CD4-positive, alpha-beta memory T cell (primary cell): ENCODE measurements at regions of chr20 and their contacts with region 1.

Region 1: DNA sequence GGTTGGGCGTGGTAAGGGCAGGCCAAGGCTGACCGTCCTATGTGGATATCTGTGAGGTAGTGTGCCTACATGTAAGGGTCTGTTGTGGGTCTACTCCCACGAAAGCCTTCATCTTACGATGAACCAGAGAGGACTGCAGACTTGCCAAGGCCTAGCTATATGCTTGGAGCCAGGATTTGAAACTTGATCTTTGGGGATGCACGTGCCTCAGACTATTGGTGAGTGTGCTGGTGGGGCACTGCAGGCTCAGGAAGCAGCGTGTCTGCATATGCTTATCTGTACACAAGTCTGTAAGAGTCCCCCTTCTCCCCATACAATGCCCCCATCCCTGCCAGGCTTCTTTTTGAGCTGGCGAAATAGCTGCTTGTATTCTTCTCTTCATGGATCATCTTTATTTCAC is 17.9 kb downstream of the PLCG1 start:
- DNase-seq: peak in 1 of 5 donors; percentile 30
- H3K4me3 ChIP-seq: no peak overlapping the region
- H3K4me3 Mint-ChIP-seq: peak overlapping the region in 7 of 8 donors; percentile 37 to 93 (median 75)
- H3K27ac ChIP-seq: peak overlapping the region; percentile 73
- H3K27ac Mint-ChIP-seq: peak overlapping the region; percentile 78 to 99 (median 98)
- H3K4me1 ChIP-seq: peaks cover 100% of the 10 kb centered on the region
- H3K4me1 Mint-ChIP-seq: peaks cover 89 to 100% (median 94%) of the 10 kb centered on the region in 4 donors
- H3K27me3 ChIP-seq: no peaks in the 10 kb centered on the region
- H3K27me3 Mint-ChIP-seq: peaks cover 0 to 3% of the 10 kb centered on the region in 2 donors

Region 2: DNA sequence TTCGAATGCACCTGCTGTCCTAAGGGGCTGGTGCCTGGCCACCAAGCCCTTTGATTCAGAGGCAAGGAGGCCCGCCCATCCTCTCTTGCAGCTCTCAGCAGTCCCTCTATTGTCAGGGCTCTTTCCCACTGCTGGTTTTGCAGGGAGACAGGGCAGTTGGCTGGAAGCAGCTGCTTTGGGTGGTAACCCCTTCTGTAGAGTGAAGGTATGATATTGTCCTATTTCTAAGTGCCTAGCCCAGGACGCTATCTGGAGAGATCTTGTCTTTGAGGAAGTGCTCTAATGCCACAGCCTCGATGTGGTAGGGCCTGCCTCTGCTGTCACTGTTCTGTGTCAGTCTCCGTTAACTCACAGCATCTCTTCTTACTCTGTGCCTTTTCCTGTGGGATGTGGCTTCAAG is 12.3 kb before region 1 on chr20:
- CTCF ChIA-PET with region 1: interaction called, 178 read pairs
- POLR2A ChIA-PET with region 1: interaction called, 753 read pairs
- intact Hi-C with region 1: loop called (anchors 1 kb)
- DNase-seq: peak; percentile 49 to 82 (median 54)
- H3K4me3 ChIP-seq: peak overlapping the region in 1 of 2 donors; percentile 82
- H3K4me3 Mint-ChIP-seq: peak overlapping the region; percentile 93 to 99 (median 96)
- H3K27ac ChIP-seq: peak overlapping the region; percentile 84
- H3K27ac Mint-ChIP-seq: peak overlapping the region; percentile 88 to 98 (median 93)
- H3K4me1 ChIP-seq: peaks cover 89% of the 10 kb centered on the region
- H3K4me1 Mint-ChIP-seq: peaks cover 79 to 100% (median 87%) of the 10 kb centered on the region in 4 donors
- H3K27me3 ChIP-seq: no peaks in the 10 kb centered on the region
- H3K27me3 Mint-ChIP-seq: no peaks in the 10 kb centered on the region

Region 3: GRCh38 chr20:41167481-41168253 is 12.4 kb after region 1 on chr20:
- CTCF ChIA-PET with region 1: interaction called, 51 read pairs
- POLR2A ChIA-PET with region 1: interaction called, 70 read pairs
- intact Hi-C with region 1: no loop called
- DNase-seq: no peak
- H3K4me3 ChIP-seq: no peak overlapping the region
- H3K4me3 Mint-ChIP-seq: no peak overlapping the region
- H3K27ac ChIP-seq: peak overlapping the region; percentile 22
- H3K27ac Mint-ChIP-seq: peak overlapping the region; percentile 36 to 98 (median 73)
- H3K4me1 ChIP-seq: peaks cover 16% of the 10 kb centered on the region
- H3K4me1 Mint-ChIP-seq: peaks cover 5 to 58% (median 32%) of the 10 kb centered on the region in 4 donors
- H3K27me3 ChIP-seq: no peaks in the 10 kb centered on the region
- H3K27me3 Mint-ChIP-seq: no peaks in the 10 kb centered on the region